ENCODE measurements at regions of chr2 and their contacts with region 1.

Region 1: DNA sequence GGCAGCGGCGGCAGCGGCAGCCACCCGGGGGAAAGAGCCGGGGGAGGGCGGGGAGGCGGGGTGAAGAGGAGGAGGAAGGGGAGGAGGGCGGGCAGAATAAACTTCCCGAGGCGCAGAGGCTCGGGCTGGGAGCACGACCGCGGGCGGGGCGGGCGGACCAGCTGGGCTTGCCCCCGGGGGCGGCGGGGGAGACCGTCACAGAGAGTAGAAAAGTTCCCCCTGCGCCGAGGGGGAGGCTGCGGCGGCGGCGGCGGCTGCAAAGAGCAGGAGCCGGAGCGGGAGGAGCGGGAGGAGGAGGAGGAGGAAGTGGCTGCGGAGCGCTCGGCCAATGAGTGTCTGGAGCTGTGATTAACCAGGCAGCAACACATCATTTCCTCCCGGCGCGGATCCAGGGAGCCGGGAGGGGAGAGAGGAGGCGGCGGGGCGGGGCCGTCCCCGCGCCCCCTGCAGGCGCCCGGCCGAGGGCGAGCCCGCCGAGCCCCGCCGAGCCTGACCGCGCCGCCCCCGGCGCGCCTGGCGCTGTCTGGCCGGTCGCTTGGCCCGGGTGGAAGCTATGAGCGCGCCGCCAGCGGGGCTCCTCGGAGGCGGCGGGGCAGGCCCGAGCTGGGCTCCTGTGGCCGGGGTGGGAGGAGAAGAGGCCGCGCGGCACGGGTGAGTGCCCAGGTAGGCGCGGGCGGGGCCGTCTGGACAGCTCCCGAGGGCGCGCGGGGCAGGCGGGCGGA is at the start of gene ACVR1:
- DNase-seq: peak; percentile 98
- H3K4me3 ChIP-seq: peak within 1 kb of the TSS; percentile 86 to 90 (median 89)
- H3K27ac ChIP-seq: peak within 1 kb of the TSS; percentile 94 to 97 (median 96)
- H3K4me1 ChIP-seq: peaks cover 0 to 44% (median 28%) of the 10 kb centered on the region in 4 donors
- H3K27me3 ChIP-seq: no peaks in the 10 kb centered on the region
- CTCF ChIP-seq: no peak
- EP300 ChIP-seq: no peak
- POLR2A ChIP-seq: peak in 1 of 2 donors; percentile 35
- total RNA-seq, gene ACVR1: 20.0 to 36.0 (median 21.9) TPM

Region 2: GRCh38 chr2:157784169-157784822 is 91.9 kb before region 1 on chr2:
- intact Hi-C with region 1: loop called (anchors 5 kb)
- DNase-seq: peak; percentile 77
- H3K4me3 ChIP-seq: no peak overlapping the region
- H3K27ac ChIP-seq: peak overlapping the region; percentile 57 to 73 (median 68)
- H3K4me1 ChIP-seq: peaks cover 0 to 74% (median 62%) of the 10 kb centered on the region in 4 donors
- H3K27me3 ChIP-seq: no peaks in the 10 kb centered on the region
- CTCF ChIP-seq: no peak
- EP300 ChIP-seq: no peak
- POLR2A ChIP-seq: no peak

Region 3: GRCh38 chr2:157838442-157839161 is 37.6 kb before region 1 on chr2:
- intact Hi-C with region 1: loop called (anchors 2 kb)
- DNase-seq: no peak
- H3K4me3 ChIP-seq: peak overlapping the region; percentile 6 to 45 (median 42)
- H3K27ac ChIP-seq: peak overlapping the region; percentile 64 to 82 (median 76)
- H3K4me1 ChIP-seq: peaks cover 0 to 60% (median 50%) of the 10 kb centered on the region in 4 donors
- H3K27me3 ChIP-seq: no peaks in the 10 kb centered on the region
- CTCF ChIP-seq: no peak
- EP300 ChIP-seq: no peak
- POLR2A ChIP-seq: no peak